Mammary epithelial cell (primary cell): ENCODE measurements at regions of chr3 and their contacts with region 1.

Region 1: DNA sequence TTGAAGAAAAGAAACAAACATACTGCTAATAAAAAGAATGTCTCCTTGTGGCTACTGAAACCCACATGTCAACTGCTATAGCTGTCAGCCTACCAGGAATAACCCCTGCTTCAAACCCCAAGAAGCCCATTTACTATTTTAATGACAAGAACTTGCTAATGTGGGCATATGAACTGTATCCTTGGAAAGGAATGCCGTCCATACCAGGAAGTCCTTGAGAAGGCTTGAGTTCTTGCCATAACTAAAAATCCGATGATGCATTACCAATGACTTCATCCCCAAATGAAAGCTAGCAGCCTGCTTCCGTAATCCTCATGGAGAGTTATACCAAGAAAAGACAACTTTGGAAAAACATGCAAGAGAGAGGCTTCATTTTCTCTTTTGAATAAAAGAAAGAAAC is 34.8 kb downstream of the MINDY4B start:
- DNase-seq: no peak
- H3K4me3 ChIP-seq: no peak overlapping the region
- H3K27ac ChIP-seq: no peak overlapping the region
- H3K4me1 ChIP-seq: no peaks in the 10 kb centered on the region
- H3K27me3 ChIP-seq: peaks cover 3% of the 10 kb centered on the region
- CTCF ChIP-seq: no peak

Region 2: GRCh38 chr3:150528354-150528797 is 342.0 kb before region 1 on chr3:
- CTCF ChIA-PET with region 1: no interaction called
- dilution Hi-C with region 1: no loop called
- in situ Hi-C with region 1: loop called in 1 of 2 experiments (anchors 25 kb)
- intact Hi-C with region 1: loop called (anchors 1 kb)
- DNase-seq: no peak
- H3K4me3 ChIP-seq: no peak overlapping the region
- H3K27ac ChIP-seq: no peak overlapping the region
- H3K4me1 ChIP-seq: no peaks in the 10 kb centered on the region
- H3K27me3 ChIP-seq: no peaks in the 10 kb centered on the region
- CTCF ChIP-seq: peak in 1 of 2 donors; percentile 30

Region 3: GRCh38 chr3:150546226-150547044 is 324.0 kb before region 1 on chr3 and contains the starts of genes EIF2A and SERP1:
- CTCF ChIA-PET with region 1: no interaction called
- dilution Hi-C with region 1: no loop called
- in situ Hi-C with region 1: loop called in 1 of 2 experiments (anchors 25 kb)
- intact Hi-C with region 1: no loop called
- DNase-seq: peak; percentile 99
- H3K4me3 ChIP-seq: peak within 1 kb of the TSS; percentile 96 to 99 (median 97)
- H3K27ac ChIP-seq: peak within 1 kb of the TSS; percentile 96
- H3K4me1 ChIP-seq: peaks cover 14% of the 10 kb centered on the region
- H3K27me3 ChIP-seq: no peaks in the 10 kb centered on the region
- CTCF ChIP-seq: no peak
- total RNA-seq, gene EIF2A: 76.6 to 140 TPM
- total RNA-seq, gene SERP1: 95.2 to 140 TPM

Region 4: GRCh38 chr3:150589759-150590158 is 280.6 kb before region 1 on chr3:
- CTCF ChIA-PET with region 1: no interaction called
- dilution Hi-C with region 1: no loop called
- in situ Hi-C with region 1: no loop called
- intact Hi-C with region 1: loop called (anchors 1 kb)
- DNase-seq: no peak
- H3K4me3 ChIP-seq: no peak overlapping the region
- H3K27ac ChIP-seq: no peak overlapping the region
- H3K4me1 ChIP-seq: no peaks in the 10 kb centered on the region
- H3K27me3 ChIP-seq: no peaks in the 10 kb centered on the region
- CTCF ChIP-seq: no peak

Region 5: GRCh38 chr3:150653110-150653561 is 217.3 kb before region 1 on chr3:
- CTCF ChIA-PET with region 1: no interaction called
- dilution Hi-C with region 1: no loop called
- in situ Hi-C with region 1: no loop called
- intact Hi-C with region 1: no loop called
- DNase-seq: no peak
- H3K4me3 ChIP-seq: no peak overlapping the region
- H3K27ac ChIP-seq: no peak overlapping the region
- H3K4me1 ChIP-seq: no peaks in the 10 kb centered on the region
- H3K27me3 ChIP-seq: no peaks in the 10 kb centered on the region
- CTCF ChIP-seq: no peak

Region 6: DNA sequence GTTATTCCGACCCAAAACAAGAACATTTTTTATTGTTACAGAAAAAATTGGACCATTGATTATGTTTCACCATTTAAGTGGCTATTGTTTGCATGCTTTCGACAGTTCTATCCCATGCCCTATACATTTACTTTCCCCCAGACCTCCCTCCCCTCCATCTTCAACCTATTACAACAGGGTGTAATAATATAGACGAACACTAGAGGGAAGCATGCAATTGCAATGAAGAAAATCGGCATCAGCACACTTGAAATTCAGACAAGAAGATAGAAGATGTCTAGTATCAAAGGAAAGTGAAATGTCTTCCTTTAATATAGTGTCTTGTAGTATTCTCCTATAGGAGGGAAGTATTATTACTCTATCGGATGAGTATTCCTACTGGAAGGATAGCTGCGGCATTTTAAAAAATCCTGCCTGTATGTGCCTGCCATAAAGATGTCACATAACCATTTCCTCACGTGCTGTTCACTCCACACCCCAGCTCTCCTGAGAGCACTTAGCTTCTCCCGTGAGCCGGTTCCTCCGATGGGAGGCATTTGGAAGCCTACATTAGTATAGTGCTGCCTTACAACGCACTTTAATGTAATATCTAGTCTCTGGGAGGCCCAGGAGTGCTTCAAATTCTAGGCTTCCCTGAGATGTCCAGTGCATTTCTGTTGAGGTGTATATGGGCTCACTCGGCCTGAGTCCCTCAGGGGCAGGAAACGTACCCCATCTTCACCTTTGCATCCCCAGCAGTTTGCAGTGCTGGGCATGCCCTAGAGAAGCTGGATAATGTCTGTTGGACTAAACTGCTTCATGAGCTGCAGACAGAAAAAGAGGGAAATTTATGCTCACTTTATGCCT is 148.9 kb before region 1 on chr3:
- CTCF ChIA-PET with region 1: no interaction called
- dilution Hi-C with region 1: no loop called
- in situ Hi-C with region 1: loop called (anchors 5 to 10 kb)
- intact Hi-C with region 1: loop called (anchors 1 kb)
- DNase-seq: peak; percentile 51
- H3K4me3 ChIP-seq: no peak overlapping the region
- H3K27ac ChIP-seq: no peak overlapping the region
- H3K4me1 ChIP-seq: peaks cover 4% of the 10 kb centered on the region
- H3K27me3 ChIP-seq: no peaks in the 10 kb centered on the region
- CTCF ChIP-seq: peak; percentile 73 to 91

Region 7: GRCh38 chr3:150787741-150788370 is 82.5 kb before region 1 on chr3:
- CTCF ChIA-PET with region 1: no interaction called
- dilution Hi-C with region 1: no loop called
- in situ Hi-C with region 1: no loop called
- intact Hi-C with region 1: loop called (anchors 1 kb)
- DNase-seq: peak; percentile 50
- H3K4me3 ChIP-seq: no peak overlapping the region
- H3K27ac ChIP-seq: no peak overlapping the region
- H3K4me1 ChIP-seq: peaks cover 6% of the 10 kb centered on the region
- H3K27me3 ChIP-seq: no peaks in the 10 kb centered on the region
- CTCF ChIP-seq: peak; percentile 90 to 99